ENCODE measurements at regions of chr18 and their contacts with region 1.

Region 1: DNA sequence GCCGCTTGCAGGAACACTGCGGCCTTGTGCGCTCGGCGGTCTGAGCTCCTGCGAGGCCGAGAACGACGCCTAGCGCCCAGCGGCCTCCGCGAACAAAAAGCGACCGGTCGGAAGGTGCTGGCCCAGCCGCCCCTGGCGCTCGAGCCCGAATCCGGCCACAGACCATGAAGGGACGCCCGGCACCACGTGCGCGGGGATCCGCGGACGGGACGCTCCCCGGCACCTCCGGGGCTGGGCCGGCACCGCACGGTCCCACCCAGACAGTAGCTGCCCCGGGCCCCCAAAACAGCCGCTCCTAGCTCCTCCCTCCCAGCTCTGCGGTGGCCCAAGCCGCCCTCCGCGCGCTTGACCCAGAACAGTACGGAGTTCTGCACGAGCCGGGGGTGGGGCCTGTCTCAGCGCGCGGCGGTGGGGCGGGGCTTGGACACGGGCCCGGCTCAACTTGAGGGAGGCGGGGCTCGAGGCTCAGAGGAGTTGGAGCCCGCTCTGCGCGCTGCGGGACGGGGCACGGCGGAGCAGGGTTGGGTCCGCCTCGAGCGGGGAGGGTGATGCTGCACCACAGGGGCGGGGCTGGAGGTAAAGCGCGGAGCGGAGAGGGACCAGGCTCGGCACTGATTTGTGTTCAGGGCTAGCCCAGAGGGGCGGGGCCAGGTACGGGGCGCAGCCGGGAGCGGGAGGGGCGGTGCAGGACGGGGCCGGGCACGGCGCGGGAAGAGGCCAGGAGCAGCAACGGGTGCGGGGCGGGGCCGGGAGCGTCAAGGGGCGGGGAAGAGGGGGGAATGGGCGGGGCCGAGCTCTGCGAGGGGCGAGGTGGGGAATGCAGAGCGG is 538 bp upstream of the IMPA2 start:
- DNase-seq: peak; percentile 88 to 97 (median 92)
- ATAC-seq: peak; percentile 90
- H3K4me3 ChIP-seq: peak overlapping the region; percentile 56 to 68
- H3K4me3 Mint-ChIP-seq: peak overlapping the region; percentile 85
- H3K27ac ChIP-seq: no peak overlapping the region
- H3K27ac Mint-ChIP-seq: peak overlapping the region; percentile 52
- H3K4me1 ChIP-seq: no peaks in the 10 kb centered on the region
- H3K4me1 Mint-ChIP-seq: peaks cover 11% of the 10 kb centered on the region
- H3K27me3 ChIP-seq: peaks cover 0 to 2% of the 10 kb centered on the region in 2 experiments
- H3K27me3 Mint-ChIP-seq: no peaks in the 10 kb centered on the region
- CTCF ChIP-seq: no peak

Region 2: GRCh38 chr18:10525371-10526210 is 1455.2 kb before region 1 on chr18 and contains the start of gene NAPG:
- CTCF ChIA-PET with region 1: no interaction called
- POLR2A ChIA-PET with region 1: no interaction called
- intact Hi-C with region 1: loop called in 1 of 2 experiments (anchors 10 kb)
- DNase-seq: peak; percentile 78 to 97 (median 88)
- ATAC-seq: peak; percentile 86
- H3K4me3 ChIP-seq: peak within 1 kb of the TSS; percentile 90 to 98
- H3K4me3 Mint-ChIP-seq: peak within 1 kb of the TSS; percentile 97
- H3K27ac ChIP-seq: peak within 1 kb of the TSS; percentile 75 to 87
- H3K27ac Mint-ChIP-seq: peak within 1 kb of the TSS; percentile 96
- H3K4me1 ChIP-seq: peaks cover 31% of the 10 kb centered on the region
- H3K4me1 Mint-ChIP-seq: peaks cover 50% of the 10 kb centered on the region
- H3K27me3 ChIP-seq: no peaks in the 10 kb centered on the region
- H3K27me3 Mint-ChIP-seq: no peaks in the 10 kb centered on the region
- CTCF ChIP-seq: no peak
- total RNA-seq, gene NAPG: 33.2 to 35.8 TPM

Region 3: GRCh38 chr18:11649839-11650238 is 330.9 kb before region 1 on chr18:
- CTCF ChIA-PET with region 1: no interaction called
- POLR2A ChIA-PET with region 1: no interaction called
- intact Hi-C with region 1: no loop called
- DNase-seq: no peak
- ATAC-seq: no peak
- H3K4me3 ChIP-seq: no peak overlapping the region
- H3K4me3 Mint-ChIP-seq: no peak overlapping the region
- H3K27ac ChIP-seq: no peak overlapping the region
- H3K27ac Mint-ChIP-seq: no peak overlapping the region
- H3K4me1 ChIP-seq: no peaks in the 10 kb centered on the region
- H3K4me1 Mint-ChIP-seq: no peaks in the 10 kb centered on the region
- H3K27me3 ChIP-seq: no peaks in the 10 kb centered on the region
- H3K27me3 Mint-ChIP-seq: peaks cover 19% of the 10 kb centered on the region
- CTCF ChIP-seq: no peak

Region 4: DNA sequence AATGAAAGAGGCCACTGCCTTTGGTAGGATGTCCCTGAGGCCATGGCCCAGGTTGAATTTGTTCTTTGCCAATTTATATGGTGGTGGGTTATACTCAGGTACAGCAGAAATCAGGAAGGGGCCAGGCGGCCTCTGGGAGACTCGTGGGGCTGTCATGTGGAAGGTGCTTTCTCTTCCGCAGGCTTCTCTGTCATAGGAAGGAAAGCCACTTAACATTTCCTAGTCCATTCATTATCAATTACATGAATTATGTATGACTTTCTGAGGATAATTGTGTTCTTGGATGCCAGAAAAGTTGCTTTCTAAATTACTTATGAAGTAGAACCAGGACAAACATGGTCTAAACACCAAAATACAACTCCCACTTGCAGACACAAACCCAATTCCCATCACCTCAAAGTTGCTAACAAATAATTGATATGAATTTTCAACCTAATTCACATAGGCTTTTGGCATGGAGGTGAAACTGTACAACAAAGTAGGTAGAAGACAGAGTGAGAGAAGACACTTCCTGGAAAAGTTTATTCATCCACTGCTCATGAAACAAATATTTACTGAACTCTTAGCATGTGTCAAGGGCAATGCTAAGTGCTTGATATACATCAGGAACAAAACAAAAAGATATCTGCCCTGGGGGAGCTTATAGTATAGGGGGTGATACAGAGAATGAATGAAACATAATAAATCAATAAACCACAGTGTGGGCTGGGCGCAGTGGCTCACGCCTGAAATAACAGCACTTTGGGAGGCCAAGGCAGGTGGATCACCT is 180.0 kb before region 1 on chr18:
- CTCF ChIA-PET with region 1: no interaction called
- POLR2A ChIA-PET with region 1: no interaction called
- intact Hi-C with region 1: no loop called
- DNase-seq: no peak
- ATAC-seq: no peak
- H3K4me3 ChIP-seq: no peak overlapping the region
- H3K4me3 Mint-ChIP-seq: no peak overlapping the region
- H3K27ac ChIP-seq: no peak overlapping the region
- H3K27ac Mint-ChIP-seq: no peak overlapping the region
- H3K4me1 ChIP-seq: no peaks in the 10 kb centered on the region
- H3K4me1 Mint-ChIP-seq: no peaks in the 10 kb centered on the region
- H3K27me3 ChIP-seq: no peaks in the 10 kb centered on the region
- H3K27me3 Mint-ChIP-seq: peaks cover 12% of the 10 kb centered on the region
- CTCF ChIP-seq: no peak

Region 5: GRCh38 chr18:11947214-11948191 is 33.3 kb before region 1 on chr18:
- CTCF ChIA-PET with region 1: no interaction called
- POLR2A ChIA-PET with region 1: interaction called, 4 read pairs
- intact Hi-C with region 1: loop called (anchors 1 to 2 kb)
- DNase-seq: peak; percentile 9 to 84 (median 53)
- ATAC-seq: peak; percentile 86
- H3K4me3 ChIP-seq: peak overlapping the region; percentile 57 to 73
- H3K4me3 Mint-ChIP-seq: peak overlapping the region; percentile 86
- H3K27ac ChIP-seq: peak overlapping the region; percentile 36 to 63
- H3K27ac Mint-ChIP-seq: peak overlapping the region; percentile 72
- H3K4me1 ChIP-seq: peaks cover 4% of the 10 kb centered on the region
- H3K4me1 Mint-ChIP-seq: peaks cover 11% of the 10 kb centered on the region
- H3K27me3 ChIP-seq: no peaks in the 10 kb centered on the region
- H3K27me3 Mint-ChIP-seq: no peaks in the 10 kb centered on the region
- CTCF ChIP-seq: no peak

Region 6: DNA sequence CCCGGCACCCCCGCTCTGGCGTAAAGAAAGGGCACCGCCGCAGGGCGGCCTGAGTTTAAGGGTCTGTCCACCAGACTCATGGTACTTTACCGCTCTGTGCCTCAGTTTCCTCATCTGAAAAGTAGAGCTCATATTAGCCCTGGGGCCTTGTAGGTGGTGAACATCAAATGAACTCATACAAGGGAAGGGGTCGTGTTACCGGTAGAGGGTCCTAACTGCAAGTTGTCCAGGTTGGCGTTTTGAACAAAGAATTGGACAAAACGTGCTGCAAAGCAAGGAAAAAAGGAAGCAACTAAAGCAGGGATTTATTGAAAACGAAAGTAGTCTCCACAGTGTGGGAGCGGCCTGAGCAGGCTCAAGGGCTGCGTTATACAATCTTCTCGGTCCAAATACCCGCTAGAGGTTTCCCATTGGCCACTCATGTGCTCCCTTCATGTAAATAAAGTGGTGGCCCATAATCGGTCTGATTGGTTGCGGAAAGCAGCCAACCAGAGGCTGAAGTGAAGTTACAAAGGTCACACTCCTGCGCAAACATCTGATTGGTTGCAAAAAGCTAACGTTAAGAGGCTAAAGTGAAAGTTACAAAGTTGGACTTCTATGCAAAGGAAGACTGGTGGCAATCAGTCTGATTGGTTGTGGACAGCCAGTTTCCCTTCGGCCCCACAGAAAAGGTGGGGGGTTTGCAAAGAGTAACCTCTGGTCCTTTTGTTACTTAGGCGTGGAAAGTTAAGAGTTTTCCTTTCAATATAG is 1157.1 kb after region 1 on chr18:
- CTCF ChIA-PET with region 1: no interaction called
- POLR2A ChIA-PET with region 1: no interaction called
- intact Hi-C with region 1: loop called in 1 of 2 experiments (anchors 5 kb)
- DNase-seq: peak; percentile 28 to 90 (median 61)
- ATAC-seq: peak; percentile 73
- H3K4me3 ChIP-seq: peak overlapping the region; percentile 84 to 98
- H3K4me3 Mint-ChIP-seq: peak overlapping the region; percentile 94
- H3K27ac ChIP-seq: peak overlapping the region; percentile 87 to 90
- H3K27ac Mint-ChIP-seq: peak overlapping the region; percentile 96
- H3K4me1 ChIP-seq: peaks cover 20% of the 10 kb centered on the region
- H3K4me1 Mint-ChIP-seq: peaks cover 28% of the 10 kb centered on the region
- H3K27me3 ChIP-seq: no peaks in the 10 kb centered on the region
- H3K27me3 Mint-ChIP-seq: no peaks in the 10 kb centered on the region
- CTCF ChIP-seq: no peak

Measured in CD8-positive, alpha-beta T cell (primary cell).